SK-N-SH (cell line): ENCODE measurements at regions of chr1 and their contacts with region 1.

Region 1: DNA sequence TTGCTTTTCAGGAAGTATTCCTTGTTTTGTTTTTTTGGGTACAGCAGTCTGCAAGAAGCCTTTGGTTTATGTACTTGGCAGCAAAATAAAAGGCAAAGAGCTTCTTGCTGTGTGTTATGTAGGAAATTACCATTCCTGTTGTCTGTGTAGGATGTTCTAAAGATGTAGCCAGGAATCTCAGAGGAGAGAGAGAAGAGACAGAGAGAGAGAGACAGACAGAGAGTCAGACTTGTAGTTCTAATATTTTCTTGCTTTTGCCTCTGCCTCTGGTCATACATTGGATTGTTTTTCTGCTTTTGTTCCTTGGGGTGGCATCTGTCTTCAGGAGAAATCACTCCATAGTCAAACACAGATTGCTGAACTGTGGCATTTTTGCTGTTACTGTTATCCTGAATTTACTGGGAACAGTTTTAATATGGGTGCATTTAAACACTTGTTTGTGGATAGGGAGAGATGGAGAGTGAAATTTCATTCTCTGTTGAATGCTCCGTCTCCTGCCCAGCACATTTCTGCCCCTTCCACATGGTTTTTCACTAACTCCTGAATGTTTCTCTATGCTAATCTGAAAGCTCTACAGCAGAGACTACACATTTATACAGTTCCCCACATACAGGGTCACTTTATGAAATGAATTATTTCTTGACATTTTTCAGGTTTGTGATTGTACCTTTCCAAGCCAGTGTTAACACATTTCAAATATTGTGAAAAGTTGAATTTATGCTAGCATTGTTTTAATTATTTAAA is 49.8 kb downstream of the POU2F1 start:
- DNase-seq: no peak
- H3K4me3 ChIP-seq: no peak overlapping the region
- H3K27ac ChIP-seq: no peak overlapping the region
- H3K4me1 ChIP-seq: peaks cover 5 to 8% of the 10 kb centered on the region in 2 experiments; a peak in 3 of 4 replicates
- H3K27me3 ChIP-seq: no peaks in the 10 kb centered on the region
- CTCF ChIP-seq: no peak
- EP300 ChIP-seq: no peak
- RAD21 ChIP-seq: no peak; the same call in 1 of the 2 replicates

Region 2: DNA sequence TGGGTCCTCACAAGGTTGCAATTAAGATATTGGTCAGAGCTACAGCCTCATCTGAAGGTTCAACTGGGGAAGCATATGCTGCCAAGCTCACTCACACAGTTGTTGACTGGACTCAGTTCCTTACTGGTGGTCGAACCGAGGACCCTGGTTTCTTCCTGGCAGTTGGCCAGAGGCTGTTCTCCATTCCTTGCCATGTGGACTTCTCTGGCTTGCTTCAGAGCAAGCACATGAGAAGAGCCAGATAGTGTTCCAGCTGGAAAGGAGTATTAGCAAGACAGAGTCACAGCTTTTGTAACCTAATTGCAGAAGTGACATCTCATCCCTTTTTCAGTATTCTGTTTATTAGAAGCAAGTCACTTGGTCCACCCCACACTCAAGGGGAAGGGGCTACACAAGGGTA is 26.3 kb before region 1 on chr1:
- CTCF ChIA-PET with region 1: interaction called, 14 read pairs
- POLR2A ChIA-PET with region 1: no interaction called
- DNase-seq: no peak
- H3K4me3 ChIP-seq: no peak overlapping the region
- H3K27ac ChIP-seq: no peak overlapping the region
- H3K4me1 ChIP-seq: no peaks in the 10 kb centered on the region; a peak in 2 of 4 replicates
- H3K27me3 ChIP-seq: no peaks in the 10 kb centered on the region
- CTCF ChIP-seq: no peak
- EP300 ChIP-seq: no peak
- RAD21 ChIP-seq: no peak

Region 3: DNA sequence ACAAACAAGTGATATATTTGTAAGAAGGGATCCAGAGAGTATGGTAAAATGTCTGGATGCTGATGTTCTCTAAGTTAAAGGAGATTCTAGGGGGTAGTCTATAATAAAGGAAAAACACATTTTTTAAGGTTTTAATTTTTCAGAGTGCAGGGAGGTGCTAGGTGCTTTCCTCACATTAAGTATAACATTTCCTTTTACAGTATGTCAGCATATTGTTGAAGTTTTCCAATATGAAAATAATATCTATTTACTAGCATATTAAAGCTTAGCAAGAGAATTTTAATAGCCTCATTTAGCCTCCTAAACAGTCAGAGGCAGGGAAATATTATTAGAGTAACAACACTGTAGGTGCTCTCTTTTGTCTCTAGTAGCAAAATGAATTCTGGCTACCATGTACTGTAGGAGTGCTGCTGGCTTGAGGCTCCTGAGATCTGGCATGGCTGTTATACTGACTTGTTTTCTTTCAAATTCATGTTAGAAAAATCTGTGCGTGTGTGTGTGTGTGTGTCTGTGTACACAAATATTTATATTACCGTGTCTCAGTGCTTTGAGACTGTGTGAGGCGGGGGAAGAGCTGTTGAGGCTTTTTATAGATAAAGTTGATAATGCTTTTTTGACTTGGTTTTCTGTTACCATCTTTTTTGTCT is 21.1 kb after region 1 on chr1:
- CTCF ChIA-PET with region 1: interaction called, 10 read pairs
- POLR2A ChIA-PET with region 1: interaction called, 3 read pairs
- DNase-seq: no peak
- H3K4me3 ChIP-seq: no peak overlapping the region
- H3K27ac ChIP-seq: peak overlapping the region in 1 of 2 experiments; percentile 5; a peak in 2 of 4 replicates
- H3K4me1 ChIP-seq: peaks cover 0 to 7% of the 10 kb centered on the region in 2 experiments; a peak in 1 of 4 replicates
- H3K27me3 ChIP-seq: no peaks in the 10 kb centered on the region
- CTCF ChIP-seq: no peak
- EP300 ChIP-seq: no peak
- RAD21 ChIP-seq: no peak

Region 4: DNA sequence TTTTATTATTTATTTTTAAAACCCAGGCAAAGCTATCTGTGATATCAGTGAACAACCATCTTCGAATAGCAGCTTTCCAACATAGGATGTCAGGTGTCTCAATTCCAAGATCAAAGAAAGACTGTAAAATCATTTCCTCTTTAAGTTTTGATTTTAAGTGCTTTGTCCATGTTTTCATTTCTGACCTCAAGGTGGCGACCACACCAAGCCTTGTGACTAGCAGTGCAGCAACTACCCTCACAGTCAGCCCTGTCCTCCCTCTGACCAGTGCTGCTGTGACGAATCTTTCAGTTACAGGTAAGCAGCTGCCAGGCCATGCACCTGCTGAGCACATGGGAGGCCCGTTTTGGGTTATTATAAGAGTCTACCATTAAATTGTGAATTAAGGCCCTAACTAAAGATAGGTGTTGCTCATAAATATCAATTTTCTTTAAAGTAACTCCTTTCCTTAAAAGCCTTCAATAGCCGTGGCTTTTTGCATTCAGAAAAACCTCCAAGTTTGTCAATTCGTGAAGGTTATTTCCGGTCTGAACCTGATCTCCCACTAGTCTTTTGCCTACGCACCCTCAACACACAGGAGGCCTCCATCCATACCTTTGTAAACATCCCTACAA is 130.8 kb after region 1 on chr1:
- CTCF ChIA-PET with region 1: interaction called, 24 read pairs
- POLR2A ChIA-PET with region 1: no interaction called
- DNase-seq: peak; percentile 48
- H3K4me3 ChIP-seq: no peak overlapping the region
- H3K27ac ChIP-seq: no peak overlapping the region
- H3K4me1 ChIP-seq: no peaks in the 10 kb centered on the region; a peak in 2 of 4 replicates
- H3K27me3 ChIP-seq: no peaks in the 10 kb centered on the region
- CTCF ChIP-seq: peak; percentile 65
- EP300 ChIP-seq: no peak
- RAD21 ChIP-seq: peak; percentile 79

Region 5: DNA sequence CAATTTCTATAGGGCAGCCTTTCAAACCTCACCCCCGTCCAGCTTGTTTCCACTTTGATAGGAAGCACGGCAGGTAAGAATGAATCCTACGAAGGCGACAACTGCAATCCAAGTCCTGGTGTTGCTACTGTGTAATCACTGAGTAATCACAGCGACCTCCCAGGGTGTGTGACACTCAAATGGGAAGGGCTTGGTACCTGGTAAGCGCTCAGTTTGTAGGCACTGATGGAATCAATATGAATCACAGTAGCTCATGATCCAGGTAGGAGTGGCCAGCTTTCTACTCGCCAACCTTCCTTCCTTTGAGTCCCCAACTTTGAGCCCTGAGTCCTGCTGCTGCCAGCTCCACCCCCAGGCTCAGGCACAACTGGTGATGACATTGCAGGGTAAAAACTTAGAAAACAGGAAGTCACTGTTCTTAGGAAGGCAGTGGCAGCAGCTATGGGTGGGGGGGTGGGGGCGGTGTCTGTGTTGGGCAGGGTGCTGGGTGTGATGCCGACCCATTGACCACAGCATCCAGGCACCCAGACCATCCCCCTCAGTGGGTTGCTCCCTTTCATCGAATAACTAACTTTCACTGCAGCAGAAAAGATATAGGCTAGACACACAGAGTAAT is 177.1 kb after region 1 on chr1:
- CTCF ChIA-PET with region 1: interaction called, 110 read pairs
- POLR2A ChIA-PET with region 1: no interaction called
- DNase-seq: no peak
- H3K4me3 ChIP-seq: no peak overlapping the region
- H3K27ac ChIP-seq: no peak overlapping the region
- H3K4me1 ChIP-seq: no peaks in the 10 kb centered on the region
- H3K27me3 ChIP-seq: peaks cover 6% of the 10 kb centered on the region; the same call in 1 of the 2 replicates
- CTCF ChIP-seq: no peak
- EP300 ChIP-seq: no peak
- RAD21 ChIP-seq: no peak

Region 6: DNA sequence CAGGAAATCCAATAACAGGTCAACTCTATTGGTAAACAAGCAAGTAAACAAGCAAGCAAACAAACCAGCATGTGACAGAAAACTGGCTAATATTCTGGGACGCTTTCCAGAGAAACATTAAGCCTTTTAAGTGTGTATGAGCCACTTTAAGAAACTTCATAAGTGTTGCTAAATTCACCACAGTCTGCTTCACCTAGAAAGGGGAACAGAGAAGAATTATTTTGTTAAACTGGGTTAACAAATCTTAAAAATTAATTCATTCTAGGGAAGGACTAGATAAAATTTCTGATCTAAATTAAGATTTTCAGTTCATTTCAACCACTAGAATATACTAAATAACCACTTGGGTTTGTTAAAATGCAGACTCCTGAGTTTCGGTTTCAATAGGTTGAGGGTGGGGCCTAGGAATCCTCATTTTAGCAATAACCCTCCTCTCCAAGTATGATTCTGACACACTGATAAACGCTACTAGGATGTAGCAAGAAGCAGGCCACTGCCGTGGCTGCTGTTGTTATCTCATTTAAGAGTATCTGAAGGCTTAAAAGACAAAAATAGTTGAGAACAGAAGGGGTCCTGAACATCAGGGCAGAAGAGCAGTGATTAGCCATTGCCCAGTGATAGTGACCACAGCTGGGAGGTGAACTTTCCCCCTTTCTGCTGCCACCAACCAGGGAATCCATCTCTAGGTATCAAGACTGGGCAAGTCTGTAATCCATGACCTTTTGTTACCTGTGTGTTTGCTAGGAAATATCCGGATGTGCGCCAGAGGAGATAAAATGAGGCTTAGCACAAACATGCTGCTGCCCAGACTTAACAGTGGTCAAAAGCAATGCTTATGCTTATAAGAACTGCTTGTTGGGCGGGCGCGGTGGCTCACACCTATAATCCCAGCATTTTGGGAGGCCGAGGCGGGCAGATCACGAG is 271.9 kb after region 1 on chr1:
- CTCF ChIA-PET with region 1: interaction called, 15 read pairs
- POLR2A ChIA-PET with region 1: no interaction called
- DNase-seq: no peak
- H3K4me3 ChIP-seq: no peak overlapping the region
- H3K27ac ChIP-seq: no peak overlapping the region
- H3K4me1 ChIP-seq: peaks cover 0 to 2% of the 10 kb centered on the region in 2 experiments; a peak in 1 of 4 replicates
- H3K27me3 ChIP-seq: no peaks in the 10 kb centered on the region
- CTCF ChIP-seq: no peak
- EP300 ChIP-seq: no peak
- RAD21 ChIP-seq: no peak